ENCODE measurements at regions of chr4 and their contacts with region 1.

Region 1: DNA sequence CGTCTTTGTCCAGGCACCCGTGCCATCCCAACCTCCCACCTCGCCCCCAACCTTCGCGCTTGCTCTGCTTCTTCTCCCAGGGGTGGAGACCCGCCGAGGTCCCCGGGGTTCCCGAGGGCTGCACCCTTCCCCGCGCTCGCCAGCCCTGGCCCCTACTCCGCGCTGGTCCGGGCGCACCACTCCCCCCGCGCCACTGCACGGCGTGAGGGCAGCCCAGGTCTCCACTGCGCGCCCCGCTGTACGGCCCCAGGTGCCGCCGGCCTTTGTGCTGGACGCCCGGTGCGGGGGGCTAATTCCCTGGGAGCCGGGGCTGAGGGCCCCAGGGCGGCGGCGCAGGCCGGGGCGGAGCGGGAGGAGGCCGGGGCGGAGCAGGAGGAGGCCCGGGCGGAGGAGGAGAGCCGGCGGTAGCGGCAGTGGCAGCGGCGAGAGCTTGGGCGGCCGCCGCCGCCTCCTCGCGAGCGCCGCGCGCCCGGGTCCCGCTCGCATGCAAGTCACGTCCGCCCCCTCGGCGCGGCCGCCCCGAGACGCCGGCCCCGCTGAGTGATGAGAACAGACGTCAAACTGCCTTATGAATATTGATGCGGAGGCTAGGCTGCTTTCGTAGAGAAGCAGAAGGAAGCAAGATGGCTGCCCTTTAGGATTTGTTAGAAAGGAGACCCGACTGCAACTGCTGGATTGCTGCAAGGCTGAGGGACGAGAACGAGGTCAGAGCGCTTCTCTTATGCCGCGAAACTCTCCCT is at the start of gene TET2:
- DNase-seq: peak; percentile 83
- H3K4me3 ChIP-seq: peak within 1 kb of the TSS; percentile 72 to 89 (median 74)
- H3K27ac ChIP-seq: peak within 1 kb of the TSS; percentile 80 to 88 (median 83)
- H3K4me1 ChIP-seq: peaks cover 0 to 36% (median 25%) of the 10 kb centered on the region in 4 donors
- H3K27me3 ChIP-seq: no peaks in the 10 kb centered on the region
- CTCF ChIP-seq: peak in 2 of 4 experiments; percentile 13
- EP300 ChIP-seq: no peak
- POLR2A ChIP-seq: peak; percentile 9 to 41
- total RNA-seq, gene TET2: 24.6 to 30.9 (median 24.8) TPM

Region 2: GRCh38 chr4:104490770-104491480 is 655.5 kb before region 1 on chr4:
- intact Hi-C with region 1: loop called (anchors 10 kb)
- DNase-seq: peak; percentile 87
- H3K4me3 ChIP-seq: peak overlapping the region; percentile 54 to 74 (median 68)
- H3K27ac ChIP-seq: peak overlapping the region; percentile 85 to 91 (median 88)
- H3K4me1 ChIP-seq: peaks cover 0 to 33% (median 19%) of the 10 kb centered on the region in 4 donors
- H3K27me3 ChIP-seq: no peaks in the 10 kb centered on the region
- CTCF ChIP-seq: no peak
- EP300 ChIP-seq: no peak
- POLR2A ChIP-seq: no peak

Region 3: DNA sequence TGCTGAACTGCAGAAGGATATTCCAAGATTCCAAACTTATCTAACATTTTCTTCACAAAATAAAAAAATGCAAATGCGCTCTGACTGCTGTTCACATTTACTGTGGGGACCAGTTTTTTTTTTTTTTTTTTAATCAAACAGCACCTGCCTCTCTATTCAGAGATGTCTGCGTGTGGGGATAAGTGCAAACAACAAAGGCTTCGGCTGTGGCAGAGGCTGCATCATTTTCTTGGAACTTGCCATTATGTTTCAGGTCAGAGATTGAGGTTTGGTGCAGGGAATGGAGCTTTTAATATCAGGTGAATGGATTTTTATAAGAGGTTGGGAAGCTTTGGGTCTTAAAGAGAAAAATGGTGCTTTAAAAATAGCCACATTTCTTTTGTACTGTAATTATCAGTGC is 77.9 kb before region 1 on chr4:
- intact Hi-C with region 1: no loop called
- DNase-seq: no peak
- H3K4me3 ChIP-seq: no peak overlapping the region
- H3K27ac ChIP-seq: no peak overlapping the region
- H3K4me1 ChIP-seq: no peaks in the 10 kb centered on the region
- H3K27me3 ChIP-seq: no peaks in the 10 kb centered on the region
- CTCF ChIP-seq: no peak
- EP300 ChIP-seq: no peak
- POLR2A ChIP-seq: no peak

Region 4: DNA sequence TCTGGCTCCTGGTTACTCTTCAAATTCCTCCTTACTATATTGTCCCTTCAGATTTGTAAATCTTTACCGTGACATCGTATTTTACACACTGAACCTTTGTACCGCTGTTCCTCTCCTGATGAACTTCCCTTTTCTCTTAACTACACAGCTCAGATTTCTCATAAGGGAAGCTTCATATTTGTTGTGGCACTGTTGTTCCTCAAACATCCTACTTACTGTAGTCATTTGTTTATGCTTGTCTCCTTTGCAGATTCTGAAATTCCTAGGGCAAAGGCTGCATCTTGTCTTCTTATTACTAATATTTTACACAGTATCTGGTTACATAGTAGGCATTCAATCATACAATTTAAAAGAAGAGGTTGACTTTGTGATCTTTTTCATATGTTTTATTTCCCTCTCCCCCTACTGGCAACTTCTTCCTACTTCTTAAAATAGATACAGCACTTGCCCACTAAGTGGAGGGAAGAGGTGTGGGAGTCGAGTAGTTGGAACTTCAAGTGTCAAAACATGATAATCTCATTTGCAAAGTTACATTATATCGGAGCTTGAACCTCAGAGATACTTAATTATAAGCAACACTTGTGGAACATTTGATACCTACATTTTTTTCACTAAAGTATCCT is 50.2 kb after region 1 on chr4:
- intact Hi-C with region 1: loop called (anchors 2 kb)
- DNase-seq: no peak
- H3K4me3 ChIP-seq: no peak overlapping the region
- H3K27ac ChIP-seq: no peak overlapping the region
- H3K4me1 ChIP-seq: peaks cover 0 to 51% (median 37%) of the 10 kb centered on the region in 4 donors
- H3K27me3 ChIP-seq: no peaks in the 10 kb centered on the region
- CTCF ChIP-seq: no peak
- EP300 ChIP-seq: no peak
- POLR2A ChIP-seq: no peak

Region 5: GRCh38 chr4:105246712-105247111 is 100.3 kb after region 1 on chr4:
- intact Hi-C with region 1: loop called (anchors 5 kb)
- DNase-seq: no peak
- H3K4me3 ChIP-seq: no peak overlapping the region
- H3K27ac ChIP-seq: no peak overlapping the region
- H3K4me1 ChIP-seq: peaks cover 0 to 3% (median 0%) of the 10 kb centered on the region in 4 donors
- H3K27me3 ChIP-seq: no peaks in the 10 kb centered on the region
- CTCF ChIP-seq: no peak
- EP300 ChIP-seq: no peak
- POLR2A ChIP-seq: no peak

Region 6: DNA sequence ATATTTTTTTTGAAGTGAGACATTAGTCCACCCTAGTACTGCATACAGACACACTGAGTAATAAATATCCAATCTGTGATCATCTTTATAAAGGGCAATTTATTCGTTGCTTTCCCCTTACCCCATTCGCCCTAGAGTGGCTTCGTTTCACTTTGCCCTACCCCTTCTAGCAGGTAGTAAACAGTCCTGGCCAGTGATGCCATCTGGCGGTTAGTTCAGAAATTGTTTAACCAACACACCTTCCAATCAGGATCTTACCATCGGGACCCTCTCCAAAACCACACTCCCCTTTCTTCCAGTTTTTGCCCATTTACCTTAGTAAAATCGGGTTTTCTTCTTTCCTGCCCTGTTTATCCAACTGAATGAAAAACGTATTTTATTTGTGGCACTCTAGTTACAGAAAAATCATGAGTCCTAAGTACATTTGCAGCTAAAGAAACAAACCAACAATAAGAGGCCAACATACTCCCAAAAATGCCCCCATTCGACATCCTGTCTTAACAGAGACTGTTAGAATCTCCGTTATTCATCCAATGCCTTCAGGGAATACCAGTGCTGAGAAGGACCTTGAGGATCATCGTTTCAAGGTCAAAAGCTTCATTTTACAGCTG is 325.2 kb after region 1 on chr4:
- intact Hi-C with region 1: loop called (anchors 1 kb)
- DNase-seq: peak; percentile 82
- H3K4me3 ChIP-seq: peak overlapping the region in 3 of 4 donors; percentile 9 to 98 (median 78)
- H3K27ac ChIP-seq: peak overlapping the region; percentile 96 to 100 (median 99)
- H3K4me1 ChIP-seq: peaks cover 0 to 42% (median 24%) of the 10 kb centered on the region in 4 donors
- H3K27me3 ChIP-seq: no peaks in the 10 kb centered on the region
- CTCF ChIP-seq: peak; percentile 51 to 80 (median 70)
- EP300 ChIP-seq: no peak
- POLR2A ChIP-seq: no peak

Region 7: DNA sequence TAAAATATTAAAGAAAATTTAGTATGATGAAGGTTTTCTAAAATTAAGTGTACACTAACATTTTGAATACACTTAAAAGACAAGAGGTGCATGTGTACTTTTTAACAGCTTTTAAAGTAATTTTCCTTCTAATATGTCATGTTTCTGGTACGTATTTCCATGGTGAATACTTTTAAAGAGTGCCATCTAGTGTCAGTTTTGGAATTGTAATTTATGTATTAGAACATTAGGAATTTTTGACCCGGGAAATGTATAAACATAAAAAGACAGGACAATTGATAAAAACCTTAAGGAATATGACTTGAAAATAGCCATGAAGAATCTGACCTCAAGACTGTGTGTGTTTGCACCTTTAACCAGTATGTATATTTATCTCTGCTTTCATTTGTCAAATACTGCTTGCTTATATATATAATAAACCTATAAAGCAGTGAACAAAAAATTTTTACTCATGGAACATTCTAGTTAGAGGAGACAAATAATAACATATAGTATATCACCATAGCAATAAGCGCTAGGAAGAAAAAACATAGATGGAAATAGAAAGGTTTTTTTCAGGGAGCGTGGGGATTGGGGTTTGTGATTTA is 569.3 kb after region 1 on chr4:
- intact Hi-C with region 1: loop called (anchors 5 kb)
- DNase-seq: no peak
- H3K4me3 ChIP-seq: no peak overlapping the region
- H3K27ac ChIP-seq: no peak overlapping the region
- H3K4me1 ChIP-seq: peaks cover 0 to 8% (median 2%) of the 10 kb centered on the region in 4 donors
- H3K27me3 ChIP-seq: no peaks in the 10 kb centered on the region
- CTCF ChIP-seq: peak in 3 of 4 experiments; percentile 8 to 37 (median 20)
- EP300 ChIP-seq: no peak
- POLR2A ChIP-seq: no peak

Measured in sigmoid colon (tissue), 7 donors.